ENCODE measurements at regions of chr12 and their contacts with region 1.

Region 1: DNA sequence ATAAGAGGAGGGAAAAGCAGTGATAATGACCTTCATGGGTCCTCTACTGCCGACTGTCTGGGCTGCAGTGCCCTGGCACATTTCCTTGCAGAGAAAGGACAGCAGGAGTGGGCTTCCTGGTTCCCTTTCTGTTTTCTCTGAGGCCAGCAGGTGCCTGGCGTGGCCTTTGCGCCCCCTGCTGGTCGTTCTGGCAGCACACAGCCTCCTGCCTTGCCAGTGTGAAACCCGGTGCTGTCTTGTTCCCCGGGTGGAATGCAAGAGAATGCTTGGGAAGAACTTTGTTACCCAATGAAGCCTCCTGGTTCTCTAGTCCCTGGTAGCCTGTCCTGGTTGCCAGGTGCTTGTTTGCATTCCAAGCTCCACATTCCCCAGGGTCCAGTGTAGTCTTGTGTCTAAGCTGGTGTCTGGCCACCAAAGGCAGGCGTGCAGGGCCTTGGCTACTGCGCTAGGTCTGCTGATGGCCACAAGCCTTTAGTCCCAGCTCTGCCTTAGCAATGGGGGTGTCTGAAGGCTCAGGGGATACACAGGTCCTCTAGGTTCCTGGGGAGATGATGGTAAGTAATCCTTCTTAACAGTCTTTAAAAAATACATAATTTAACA is 1392.4 kb upstream of the TMEM132C start:
- DNase-seq: peak in 8 of 9 donors; percentile 15 to 58 (median 40)
- ATAC-seq: peak; percentile 53
- H3K4me3 ChIP-seq: no peak overlapping the region
- H3K4me3 Mint-ChIP-seq: no peak overlapping the region
- H3K27ac ChIP-seq: no peak overlapping the region
- H3K27ac Mint-ChIP-seq: no peak overlapping the region
- H3K4me1 ChIP-seq: no peaks in the 10 kb centered on the region
- H3K4me1 Mint-ChIP-seq: peaks cover 0 to 4% (median 0%) of the 10 kb centered on the region in 7 donors
- H3K27me3 ChIP-seq: no peaks in the 10 kb centered on the region
- H3K27me3 Mint-ChIP-seq: peaks cover 0 to 9% (median 4%) of the 10 kb centered on the region in 5 donors

Region 2: DNA sequence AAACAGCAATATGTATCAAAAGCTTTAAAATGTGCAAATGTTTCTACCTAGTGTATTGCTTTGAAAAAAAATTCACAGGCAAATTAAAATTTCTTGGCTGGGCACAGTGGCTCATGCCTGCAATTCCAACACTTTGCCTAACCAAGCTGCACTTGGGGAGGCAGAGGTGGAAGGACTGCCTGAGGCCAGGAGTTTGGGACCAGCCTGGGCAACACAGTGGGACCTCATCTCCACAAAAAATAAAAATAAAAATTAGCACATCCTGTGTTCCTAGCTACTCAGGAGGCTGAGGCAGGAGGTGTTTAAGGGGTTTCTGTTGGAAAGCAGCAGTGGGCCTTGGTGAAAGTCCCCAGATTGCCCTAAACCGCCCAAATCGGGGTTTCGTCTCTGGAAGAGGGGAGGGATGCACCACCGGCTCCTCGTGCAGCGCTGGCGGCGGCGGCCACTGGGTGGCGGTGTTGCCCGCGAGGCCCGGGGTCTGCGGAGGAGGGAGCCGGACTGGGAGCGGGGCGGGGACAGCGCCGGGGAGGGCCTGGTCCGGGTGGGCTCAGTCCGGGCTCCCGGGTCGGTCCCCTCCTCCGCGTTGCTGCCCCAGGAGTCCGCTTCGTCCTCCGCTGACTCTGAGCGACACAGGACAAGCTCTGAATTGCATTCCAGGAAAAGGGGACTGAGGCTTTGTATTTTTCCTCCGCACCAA is 1543.7 kb before region 1 on chr12:
- CTCF ChIA-PET with region 1: interaction called, 3 read pairs
- POLR2A ChIA-PET with region 1: no interaction called
- intact Hi-C with region 1: loop called in 1 of 2 experiments (anchors 5 kb)
- DNase-seq: peak in 6 of 9 donors; percentile 5 to 72 (median 15)
- ATAC-seq: peak; percentile 51
- H3K4me3 ChIP-seq: no peak overlapping the region
- H3K4me3 Mint-ChIP-seq: peak overlapping the region in 1 of 10 donors; percentile 6
- H3K27ac ChIP-seq: no peak overlapping the region
- H3K27ac Mint-ChIP-seq: no peak overlapping the region
- H3K4me1 ChIP-seq: no peaks in the 10 kb centered on the region
- H3K4me1 Mint-ChIP-seq: no peaks in the 10 kb centered on the region
- H3K27me3 ChIP-seq: peaks cover 0 to 4% of the 10 kb centered on the region in 2 donors
- H3K27me3 Mint-ChIP-seq: peaks cover 13 to 60% (median 53%) of the 10 kb centered on the region in 5 donors

Region 3: GRCh38 chr12:125533434-125534029 is 1341.0 kb before region 1 on chr12:
- CTCF ChIA-PET with region 1: no interaction called
- POLR2A ChIA-PET with region 1: no interaction called
- intact Hi-C with region 1: loop called (anchors 2 to 10 kb)
- DNase-seq: peak in 1 of 9 donors; percentile 34
- ATAC-seq: no peak
- H3K4me3 ChIP-seq: no peak overlapping the region
- H3K4me3 Mint-ChIP-seq: no peak overlapping the region
- H3K27ac ChIP-seq: no peak overlapping the region
- H3K27ac Mint-ChIP-seq: no peak overlapping the region
- H3K4me1 ChIP-seq: no peaks in the 10 kb centered on the region
- H3K4me1 Mint-ChIP-seq: peaks cover 0 to 2% (median 0%) of the 10 kb centered on the region in 7 donors
- H3K27me3 ChIP-seq: no peaks in the 10 kb centered on the region
- H3K27me3 Mint-ChIP-seq: peaks cover 0 to 32% (median 8%) of the 10 kb centered on the region in 5 donors

Region 4: DNA sequence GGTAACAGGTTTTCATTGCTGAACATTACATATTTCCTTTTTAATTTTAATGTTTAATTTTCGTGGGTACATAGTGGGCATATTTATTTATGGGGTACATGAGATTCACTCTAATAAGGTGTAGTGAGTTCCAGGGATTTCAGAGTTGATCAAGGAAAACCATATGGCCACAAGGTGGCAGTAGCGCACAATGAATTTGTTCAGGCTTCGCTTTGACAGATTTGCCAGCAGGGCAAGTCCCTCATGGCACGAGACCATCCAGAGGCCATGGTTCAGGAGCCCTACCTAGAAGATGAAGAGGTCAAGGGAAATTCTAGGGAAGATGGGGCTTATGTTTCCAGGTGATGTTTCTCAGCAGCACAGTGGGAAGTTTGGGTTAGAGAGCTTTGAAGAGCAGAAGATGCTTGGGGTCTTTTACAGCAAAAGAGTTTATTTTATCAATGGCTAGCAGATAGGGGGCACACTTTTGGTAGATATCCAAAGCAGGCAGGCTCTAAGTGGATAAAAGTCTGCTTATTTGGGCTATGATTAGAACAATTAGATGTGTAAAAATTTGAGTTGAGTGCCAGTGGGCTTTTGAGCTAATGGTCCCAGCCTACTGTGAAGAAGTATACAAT is 804.9 kb before region 1 on chr12:
- CTCF ChIA-PET with region 1: no interaction called
- POLR2A ChIA-PET with region 1: no interaction called
- intact Hi-C with region 1: loop called in 1 of 2 experiments (anchors 5 kb)
- DNase-seq: peak in 4 of 9 donors; percentile 1 to 38 (median 9)
- ATAC-seq: no peak
- H3K4me3 ChIP-seq: no peak overlapping the region
- H3K4me3 Mint-ChIP-seq: no peak overlapping the region
- H3K27ac ChIP-seq: no peak overlapping the region
- H3K27ac Mint-ChIP-seq: no peak overlapping the region
- H3K4me1 ChIP-seq: no peaks in the 10 kb centered on the region
- H3K4me1 Mint-ChIP-seq: no peaks in the 10 kb centered on the region
- H3K27me3 ChIP-seq: no peaks in the 10 kb centered on the region
- H3K27me3 Mint-ChIP-seq: no peaks in the 10 kb centered on the region

Region 5: GRCh38 chr12:126282691-126283090 is 591.8 kb before region 1 on chr12:
- CTCF ChIA-PET with region 1: no interaction called
- POLR2A ChIA-PET with region 1: no interaction called
- intact Hi-C with region 1: no loop called
- DNase-seq: no peak
- ATAC-seq: no peak
- H3K4me3 ChIP-seq: no peak overlapping the region
- H3K4me3 Mint-ChIP-seq: no peak overlapping the region
- H3K27ac ChIP-seq: no peak overlapping the region
- H3K27ac Mint-ChIP-seq: no peak overlapping the region
- H3K4me1 ChIP-seq: no peaks in the 10 kb centered on the region
- H3K4me1 Mint-ChIP-seq: no peaks in the 10 kb centered on the region
- H3K27me3 ChIP-seq: no peaks in the 10 kb centered on the region
- H3K27me3 Mint-ChIP-seq: no peaks in the 10 kb centered on the region

Region 6: DNA sequence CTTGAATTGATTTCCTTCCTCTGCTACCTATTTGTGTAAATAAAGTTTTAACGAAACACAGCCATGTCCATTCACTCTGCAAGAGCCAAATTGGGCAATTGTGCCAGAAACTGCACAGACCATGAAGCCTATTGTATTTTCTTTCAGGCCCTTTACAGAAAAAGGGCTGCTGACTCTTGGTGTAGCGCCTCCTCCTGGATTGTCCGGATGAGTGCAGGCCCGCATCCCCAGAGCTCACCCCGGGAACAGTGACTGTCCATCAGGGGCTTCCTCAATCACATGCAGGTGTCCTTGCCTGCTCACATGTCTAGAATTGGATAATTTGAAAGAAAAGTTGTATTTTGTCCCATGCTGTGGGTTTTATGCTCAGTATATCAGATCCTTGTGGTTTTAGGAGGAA is 527.1 kb before region 1 on chr12:
- CTCF ChIA-PET with region 1: no interaction called
- POLR2A ChIA-PET with region 1: no interaction called
- intact Hi-C with region 1: loop called in 1 of 2 experiments (anchors 10 kb)
- DNase-seq: no peak
- ATAC-seq: no peak
- H3K4me3 ChIP-seq: no peak overlapping the region
- H3K4me3 Mint-ChIP-seq: peak overlapping the region in 2 of 10 donors; percentile 10 to 29
- H3K27ac ChIP-seq: no peak overlapping the region
- H3K27ac Mint-ChIP-seq: no peak overlapping the region
- H3K4me1 ChIP-seq: no peaks in the 10 kb centered on the region
- H3K4me1 Mint-ChIP-seq: peaks cover 0 to 21% (median 11%) of the 10 kb centered on the region in 7 donors
- H3K27me3 ChIP-seq: no peaks in the 10 kb centered on the region
- H3K27me3 Mint-ChIP-seq: no peaks in the 10 kb centered on the region

Region 7: GRCh38 chr12:126907900-126908764 is 33.6 kb after region 1 on chr12:
- CTCF ChIA-PET with region 1: no interaction called
- POLR2A ChIA-PET with region 1: no interaction called
- intact Hi-C with region 1: no loop called
- DNase-seq: no peak
- ATAC-seq: no peak
- H3K4me3 ChIP-seq: no peak overlapping the region
- H3K4me3 Mint-ChIP-seq: no peak overlapping the region
- H3K27ac ChIP-seq: no peak overlapping the region
- H3K27ac Mint-ChIP-seq: no peak overlapping the region
- H3K4me1 ChIP-seq: no peaks in the 10 kb centered on the region
- H3K4me1 Mint-ChIP-seq: no peaks in the 10 kb centered on the region
- H3K27me3 ChIP-seq: no peaks in the 10 kb centered on the region
- H3K27me3 Mint-ChIP-seq: peaks cover 0 to 19% (median 8%) of the 10 kb centered on the region in 5 donors